Psoas muscle (tissue), 8 donors: ENCODE measurements at regions of chr11 and their contacts with region 1.

Region 1: GRCh38 chr11:112086422-112087191 is at the starts of genes SDHD and TIMM8B:
- DNase-seq: peak; percentile 95 to 98
- ATAC-seq: peak; percentile 92 to 95 (median 93)
- H3K4me3 ChIP-seq: peak within 1 kb of the TSS; percentile 93
- H3K27ac ChIP-seq: peak within 1 kb of the TSS; percentile 88
- H3K4me1 ChIP-seq: peaks cover 41% of the 10 kb centered on the region
- H3K27me3 ChIP-seq: no peaks in the 10 kb centered on the region
- CTCF ChIP-seq: peak; percentile 20
- total RNA-seq, gene SDHD: 168 to 264 (median 192) TPM
- total RNA-seq, gene TIMM8B: 86.6 to 105 (median 90.6) TPM

Region 2: DNA sequence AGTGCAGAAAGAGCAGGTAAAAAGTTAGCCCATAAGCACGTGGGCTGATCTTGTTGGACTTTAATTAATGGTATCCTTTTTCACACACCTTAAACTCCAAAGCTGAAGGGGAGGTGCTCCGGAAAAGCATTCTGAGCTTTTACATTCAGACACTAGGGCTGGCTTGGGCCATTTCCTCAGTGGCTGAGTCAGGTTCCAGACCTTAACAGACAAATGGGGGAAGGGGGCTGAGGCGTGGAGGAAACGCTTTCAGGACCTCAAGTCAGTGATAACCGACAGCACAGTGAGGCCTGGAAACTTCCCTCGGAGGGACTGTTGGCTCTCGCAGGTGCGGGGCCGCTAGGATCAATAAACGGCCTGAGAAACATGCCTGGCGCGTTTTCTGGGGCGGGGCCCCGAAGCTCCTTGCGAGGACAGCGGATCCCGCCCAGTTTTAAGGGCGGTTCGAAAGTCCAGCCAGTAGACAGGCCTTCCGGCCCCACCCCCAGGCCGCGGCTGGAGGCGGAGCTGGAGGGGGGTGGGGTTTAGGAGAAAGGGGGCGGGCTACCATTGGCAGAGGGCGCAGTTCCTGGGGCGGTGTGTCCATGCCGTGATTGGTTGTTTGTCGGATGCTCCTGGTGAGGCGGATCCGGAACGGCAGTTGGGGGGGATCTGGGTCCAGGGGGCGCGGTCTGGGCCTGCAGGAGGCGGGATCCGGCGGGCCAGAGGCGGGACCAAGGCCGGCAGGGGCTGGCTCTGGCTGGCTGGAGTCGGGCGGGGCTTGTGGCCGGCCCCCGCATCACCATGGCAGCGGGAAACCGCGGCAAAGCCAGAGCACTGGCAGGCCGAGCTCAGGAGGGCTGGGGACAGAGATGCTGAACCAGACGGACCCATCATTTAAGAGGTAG is 159.9 kb before region 1 on chr11:
- intact Hi-C with region 1: loop called in 1 of 2 experiments (anchors 5 kb)
- DNase-seq: peak; percentile 95 to 99
- ATAC-seq: peak; percentile 88 to 91 (median 89)
- H3K4me3 ChIP-seq: peak overlapping the region; percentile 63
- H3K27ac ChIP-seq: peak overlapping the region; percentile 91
- H3K4me1 ChIP-seq: peaks cover 41% of the 10 kb centered on the region
- H3K27me3 ChIP-seq: no peaks in the 10 kb centered on the region
- CTCF ChIP-seq: no peak